ENCODE measurements at regions of chr12 and their contacts with region 1.

Region 1: DNA sequence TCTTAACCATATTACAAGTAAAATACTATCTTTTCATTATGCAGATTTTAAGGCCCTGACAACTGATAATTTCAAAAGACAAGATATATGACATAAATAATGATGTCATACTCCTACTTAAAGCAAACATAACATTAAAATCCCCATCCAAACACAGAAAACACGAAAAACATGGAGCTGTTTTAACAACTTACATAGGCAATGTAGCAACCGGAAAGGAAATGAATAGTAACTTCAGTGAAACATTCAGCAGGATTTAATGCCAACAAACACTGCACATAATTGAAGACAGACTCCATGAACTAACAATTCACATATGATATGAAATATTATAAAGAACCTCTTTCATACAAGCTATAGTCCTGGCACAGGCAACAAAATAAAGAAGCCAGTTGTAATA is 21.5 kb downstream of the USP44 start:
- DNase-seq: no peak
- ATAC-seq: no peak
- H3K4me3 Mint-ChIP-seq: no peak overlapping the region
- H3K27ac Mint-ChIP-seq: no peak overlapping the region
- H3K4me1 Mint-ChIP-seq: peaks cover 2% of the 10 kb centered on the region
- H3K27me3 Mint-ChIP-seq: no peaks in the 10 kb centered on the region

Region 2: GRCh38 chr12:95117178-95117599 is 412.6 kb before region 1 on chr12:
- CTCF ChIA-PET with region 1: interaction called, 35 read pairs
- POLR2A ChIA-PET with region 1: no interaction called
- DNase-seq: peak; percentile 70
- ATAC-seq: peak; percentile 86
- H3K4me3 Mint-ChIP-seq: no peak overlapping the region
- H3K27ac Mint-ChIP-seq: no peak overlapping the region
- H3K4me1 Mint-ChIP-seq: peaks cover 5% of the 10 kb centered on the region
- H3K27me3 Mint-ChIP-seq: peaks cover 3% of the 10 kb centered on the region

Region 3: DNA sequence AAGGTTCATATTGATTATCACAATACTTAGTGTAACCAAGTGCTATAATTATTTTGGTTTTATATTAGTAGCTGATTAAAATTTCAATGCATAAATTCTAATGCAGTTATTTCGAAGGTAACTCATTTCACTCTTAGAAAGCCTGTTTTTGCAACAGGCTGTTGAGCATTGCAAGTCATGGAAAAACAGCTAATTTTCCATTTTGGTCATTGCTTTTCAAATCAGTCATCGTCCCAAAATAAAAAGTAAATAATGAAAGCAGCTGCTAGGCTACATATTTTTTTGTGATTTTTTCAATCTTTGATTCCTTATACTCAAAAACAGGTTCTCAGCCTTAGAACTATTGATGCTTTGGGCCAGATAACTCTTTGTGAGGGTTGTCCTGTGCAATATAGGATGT is 289.2 kb before region 1 on chr12:
- CTCF ChIA-PET with region 1: no interaction called
- POLR2A ChIA-PET with region 1: no interaction called
- DNase-seq: no peak
- ATAC-seq: no peak
- H3K4me3 Mint-ChIP-seq: no peak overlapping the region
- H3K27ac Mint-ChIP-seq: no peak overlapping the region
- H3K4me1 Mint-ChIP-seq: peaks cover 2% of the 10 kb centered on the region
- H3K27me3 Mint-ChIP-seq: no peaks in the 10 kb centered on the region

Region 4: GRCh38 chr12:95515197-95515596 is 14.6 kb before region 1 on chr12:
- CTCF ChIA-PET with region 1: interaction called, 16 read pairs
- POLR2A ChIA-PET with region 1: no interaction called
- DNase-seq: no peak
- ATAC-seq: no peak
- H3K4me3 Mint-ChIP-seq: no peak overlapping the region
- H3K27ac Mint-ChIP-seq: no peak overlapping the region
- H3K4me1 Mint-ChIP-seq: no peaks in the 10 kb centered on the region
- H3K27me3 Mint-ChIP-seq: no peaks in the 10 kb centered on the region

Region 5: DNA sequence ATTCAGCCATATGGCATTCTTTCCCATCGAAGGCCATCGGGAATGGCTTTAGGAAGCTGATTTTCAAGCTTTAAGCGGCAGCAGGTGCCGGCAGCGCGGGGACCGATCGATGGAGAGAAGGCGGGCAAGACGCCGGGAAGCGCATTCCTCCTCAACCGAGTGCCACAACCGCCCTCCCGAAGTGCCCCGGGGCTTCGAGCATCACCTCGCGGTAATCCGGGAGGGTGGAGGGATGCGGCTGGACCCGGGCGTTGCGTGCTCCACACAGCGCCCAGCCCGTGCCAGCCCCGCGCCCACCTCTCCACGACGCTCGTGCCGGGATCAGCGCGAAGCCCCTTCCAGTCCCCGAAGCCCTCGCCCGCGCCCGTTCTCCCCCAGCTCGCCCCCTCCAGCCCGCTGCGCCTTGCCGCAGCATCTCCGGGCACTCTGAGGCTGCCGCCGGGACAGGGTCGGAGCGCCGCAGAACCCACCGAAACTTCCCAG is 18.3 kb after region 1 on chr12:
- CTCF ChIA-PET with region 1: interaction called, 16 read pairs
- POLR2A ChIA-PET with region 1: interaction called, 4 read pairs
- DNase-seq: peak; percentile 40
- ATAC-seq: peak; percentile 44
- H3K4me3 Mint-ChIP-seq: peak overlapping the region; percentile 85
- H3K27ac Mint-ChIP-seq: peak overlapping the region; percentile 87
- H3K4me1 Mint-ChIP-seq: peaks cover 46% of the 10 kb centered on the region
- H3K27me3 Mint-ChIP-seq: peaks cover 7% of the 10 kb centered on the region

Region 6: DNA sequence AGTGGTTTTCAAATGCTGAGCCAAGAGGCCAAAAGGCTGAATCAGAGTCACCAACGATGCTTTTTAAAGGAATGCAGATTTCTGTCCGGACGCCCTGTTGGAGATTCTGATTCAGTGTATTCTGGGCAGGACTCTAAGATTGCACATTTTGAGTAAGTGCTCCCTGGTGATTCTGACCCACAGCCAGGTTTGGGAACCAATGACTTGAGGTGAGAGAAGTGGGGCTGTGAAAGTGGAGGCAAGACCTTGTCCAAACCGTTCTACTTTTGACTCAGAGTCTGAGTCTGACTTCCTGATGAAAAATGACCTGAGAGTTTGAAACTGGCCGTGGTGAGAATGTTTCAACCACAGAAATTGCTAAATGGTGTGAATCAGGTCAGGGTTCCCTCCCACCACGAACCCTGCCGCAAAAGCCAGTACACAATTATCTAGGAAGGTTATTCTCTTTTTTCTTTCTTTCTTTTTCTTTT is 170.6 kb after region 1 on chr12:
- CTCF ChIA-PET with region 1: no interaction called
- POLR2A ChIA-PET with region 1: no interaction called
- DNase-seq: no peak
- ATAC-seq: no peak
- H3K4me3 Mint-ChIP-seq: no peak overlapping the region
- H3K27ac Mint-ChIP-seq: no peak overlapping the region
- H3K4me1 Mint-ChIP-seq: no peaks in the 10 kb centered on the region
- H3K27me3 Mint-ChIP-seq: peaks cover 9% of the 10 kb centered on the region

Measured in activated CD8-positive, alpha-beta T cell treated with anti-CD3 and anti-CD28 coated beads, Interleukin-2, amount 10 ng/mL, durations not matched to agents 7 days and 5 days (primary cell).